ENCODE measurements at regions of chr1 and their contacts with region 1.

Region 1: GRCh38 chr1:175338387-175339135 is 146.0 kb upstream of the KIAA0040 start:
- DNase-seq: peak; percentile 79
- ATAC-seq: peak; percentile 100
- H3K4me3 Mint-ChIP-seq: no peak overlapping the region
- H3K27ac Mint-ChIP-seq: no peak overlapping the region
- H3K4me1 Mint-ChIP-seq: peaks cover 4% of the 10 kb centered on the region
- H3K27me3 Mint-ChIP-seq: peaks cover 16% of the 10 kb centered on the region
- CTCF ChIP-seq: peak; percentile 80

Region 2: DNA sequence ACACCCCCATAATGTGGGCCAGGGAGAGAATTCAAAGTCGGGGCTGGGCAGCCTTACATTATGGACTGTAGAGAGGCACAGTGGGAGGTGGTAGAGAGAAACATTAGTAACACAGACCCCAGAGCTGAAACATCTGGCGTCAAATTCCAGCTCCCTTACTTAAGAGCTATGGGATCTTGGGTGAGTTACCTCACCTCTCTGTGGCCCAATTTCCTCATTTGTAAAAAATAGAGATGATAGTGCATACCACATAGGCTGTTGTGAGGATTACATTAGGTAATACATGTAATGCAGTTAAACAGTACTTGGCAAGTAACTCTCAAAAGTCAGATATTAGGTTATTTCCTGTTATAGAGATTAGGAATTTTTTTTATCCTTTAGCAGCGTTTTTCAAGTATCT is 14.5 kb after region 1 on chr1:
- CTCF ChIA-PET with region 1: interaction called, 17 read pairs
- POLR2A ChIA-PET with region 1: no interaction called
- intact Hi-C with region 1: no loop called
- DNase-seq: no peak
- ATAC-seq: no peak
- H3K4me3 Mint-ChIP-seq: no peak overlapping the region
- H3K27ac Mint-ChIP-seq: no peak overlapping the region
- H3K4me1 Mint-ChIP-seq: no peaks in the 10 kb centered on the region
- H3K27me3 Mint-ChIP-seq: peaks cover 2% of the 10 kb centered on the region
- CTCF ChIP-seq: no peak

Measured in activated CD8-positive, alpha-beta T cell treated with anti-CD3 and anti-CD28 coated beads for 36 hours (primary cell).